Activated CD4-positive, alpha-beta T cell treated with anti-CD3 and anti-CD28 coated beads for 36 hours (primary cell): ENCODE measurements at regions of chr20 and their contacts with region 1.

Region 1: DNA sequence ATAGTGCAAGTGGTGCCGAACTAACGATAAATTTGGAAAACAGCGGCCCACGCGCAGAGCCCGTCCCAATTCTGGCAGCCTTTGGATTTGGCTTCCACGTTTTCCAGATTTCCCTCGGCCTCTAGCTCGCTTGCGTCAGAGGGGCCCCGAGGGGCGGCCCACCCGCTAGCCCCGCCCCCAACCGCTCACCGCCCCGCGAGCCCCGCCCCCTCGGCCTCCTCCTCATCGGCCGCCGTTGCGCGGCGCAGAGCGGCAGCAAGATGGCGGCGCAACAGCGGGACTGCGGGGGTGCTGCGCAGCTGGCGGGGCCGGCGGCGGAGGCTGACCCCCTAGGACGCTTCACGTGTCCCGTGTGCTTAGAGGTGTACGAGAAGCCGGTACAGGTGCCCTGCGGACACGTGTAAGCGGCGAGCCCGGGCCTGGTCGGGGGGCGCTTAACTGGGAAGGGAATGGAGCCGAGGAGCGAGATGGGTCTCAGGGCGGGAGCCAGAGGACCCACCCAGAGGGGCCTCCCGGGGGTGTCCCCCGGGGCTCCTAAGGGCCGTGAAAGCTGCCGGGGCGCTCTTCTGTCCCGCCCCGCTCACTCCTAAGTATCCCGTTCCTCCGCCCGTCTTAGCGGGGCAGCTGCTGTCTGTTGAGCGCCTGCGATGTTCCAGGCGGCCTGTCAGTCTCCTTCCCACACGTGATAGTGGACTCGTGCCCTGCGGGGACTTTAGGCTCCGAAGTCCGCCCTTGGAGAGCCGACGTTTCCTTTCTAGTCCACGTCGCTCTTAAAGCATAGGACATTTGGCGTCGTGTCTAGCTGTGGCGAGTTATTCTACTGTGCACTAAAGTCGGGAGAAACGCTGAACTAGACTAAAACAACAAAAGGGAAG is at the start of gene RNF114:
- DNase-seq: peak; percentile 96
- ATAC-seq: peak; percentile 93
- H3K4me3 Mint-ChIP-seq: peak within 1 kb of the TSS; percentile 85
- H3K27ac Mint-ChIP-seq: peak within 1 kb of the TSS; percentile 85
- H3K4me1 Mint-ChIP-seq: peaks cover 41% of the 10 kb centered on the region
- H3K27me3 Mint-ChIP-seq: no peaks in the 10 kb centered on the region
- total RNA-seq, gene RNF114: 47.5 to 66.6 TPM

Region 2: GRCh38 chr20:49356676-49357075 is 579.7 kb before region 1 on chr20:
- CTCF ChIA-PET with region 1: no interaction called
- POLR2A ChIA-PET with region 1: no interaction called
- intact Hi-C with region 1: no loop called
- DNase-seq: no peak
- ATAC-seq: no peak
- H3K4me3 Mint-ChIP-seq: no peak overlapping the region
- H3K27ac Mint-ChIP-seq: no peak overlapping the region
- H3K4me1 Mint-ChIP-seq: no peaks in the 10 kb centered on the region
- H3K27me3 Mint-ChIP-seq: peaks cover 8% of the 10 kb centered on the region

Region 3: DNA sequence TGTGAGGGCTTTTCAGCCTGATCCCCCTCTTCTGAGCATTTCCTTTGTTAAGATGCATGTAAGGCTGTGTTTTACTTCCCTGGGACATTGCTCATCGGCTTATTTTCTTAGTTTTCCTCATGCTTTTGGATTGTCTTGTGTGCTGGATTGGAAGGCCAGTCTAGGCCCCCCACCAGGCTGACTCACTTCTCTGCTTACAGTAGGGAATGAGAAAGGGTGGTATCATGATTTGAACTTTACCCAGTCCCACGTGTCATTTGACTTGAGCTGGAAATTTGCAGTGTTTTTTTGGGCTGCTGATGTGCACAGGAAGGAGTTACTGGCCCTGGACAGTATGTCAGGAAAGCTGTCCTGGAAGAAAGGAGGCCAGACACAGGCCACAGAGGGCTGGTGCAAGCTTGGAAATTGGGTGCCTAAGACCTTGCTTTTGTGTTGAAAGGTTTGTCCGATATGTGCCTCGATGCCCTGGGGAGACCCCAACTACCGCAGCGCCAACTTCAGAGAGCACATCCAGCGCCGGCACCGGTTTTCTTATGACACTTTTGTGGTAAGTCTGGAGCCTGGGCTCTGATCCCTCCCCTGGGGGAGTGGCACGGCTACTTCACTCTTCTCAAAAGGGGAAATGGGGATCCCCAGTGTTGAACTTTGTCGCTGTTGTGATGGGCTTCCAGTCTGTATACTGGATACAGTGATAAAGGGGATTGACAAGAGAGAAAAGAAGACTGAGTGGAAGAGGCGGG is 12.6 kb after region 1 on chr20:
- CTCF ChIA-PET with region 1: interaction called, 8 read pairs
- POLR2A ChIA-PET with region 1: interaction called, 4 read pairs
- intact Hi-C with region 1: loop called (anchors 1 kb)
- DNase-seq: no peak
- ATAC-seq: no peak
- H3K4me3 Mint-ChIP-seq: no peak overlapping the region
- H3K27ac Mint-ChIP-seq: no peak overlapping the region
- H3K4me1 Mint-ChIP-seq: peaks cover 20% of the 10 kb centered on the region
- H3K27me3 Mint-ChIP-seq: no peaks in the 10 kb centered on the region

Region 4: GRCh38 chr20:50438986-50439407 is 502.6 kb after region 1 on chr20:
- CTCF ChIA-PET with region 1: no interaction called
- POLR2A ChIA-PET with region 1: no interaction called
- intact Hi-C with region 1: no loop called
- DNase-seq: peak; percentile 49
- ATAC-seq: peak; percentile 52
- H3K4me3 Mint-ChIP-seq: no peak overlapping the region
- H3K27ac Mint-ChIP-seq: no peak overlapping the region
- H3K4me1 Mint-ChIP-seq: peaks cover 28% of the 10 kb centered on the region
- H3K27me3 Mint-ChIP-seq: peaks cover 2% of the 10 kb centered on the region